ENCODE measurements at regions of chr17 and their contacts with region 1.

Region 1: GRCh38 chr17:50094753-50095619 is at the start of gene PDK2:
- DNase-seq: peak; percentile 97
- ATAC-seq: peak; percentile 93
- H3K4me3 Mint-ChIP-seq: peak within 1 kb of the TSS; percentile 84
- H3K27ac Mint-ChIP-seq: peak within 1 kb of the TSS; percentile 91
- H3K4me1 Mint-ChIP-seq: peaks cover 19% of the 10 kb centered on the region
- H3K27me3 Mint-ChIP-seq: no peaks in the 10 kb centered on the region
- total RNA-seq, gene PDK2: 9.8 to 16.2 TPM

Region 2: GRCh38 chr17:49595980-49596379 is 499.0 kb before region 1 on chr17:
- CTCF ChIA-PET with region 1: no interaction called
- POLR2A ChIA-PET with region 1: no interaction called
- intact Hi-C with region 1: no loop called
- DNase-seq: no peak
- ATAC-seq: no peak
- H3K4me3 Mint-ChIP-seq: no peak overlapping the region
- H3K27ac Mint-ChIP-seq: no peak overlapping the region
- H3K4me1 Mint-ChIP-seq: no peaks in the 10 kb centered on the region
- H3K27me3 Mint-ChIP-seq: no peaks in the 10 kb centered on the region

Region 3: DNA sequence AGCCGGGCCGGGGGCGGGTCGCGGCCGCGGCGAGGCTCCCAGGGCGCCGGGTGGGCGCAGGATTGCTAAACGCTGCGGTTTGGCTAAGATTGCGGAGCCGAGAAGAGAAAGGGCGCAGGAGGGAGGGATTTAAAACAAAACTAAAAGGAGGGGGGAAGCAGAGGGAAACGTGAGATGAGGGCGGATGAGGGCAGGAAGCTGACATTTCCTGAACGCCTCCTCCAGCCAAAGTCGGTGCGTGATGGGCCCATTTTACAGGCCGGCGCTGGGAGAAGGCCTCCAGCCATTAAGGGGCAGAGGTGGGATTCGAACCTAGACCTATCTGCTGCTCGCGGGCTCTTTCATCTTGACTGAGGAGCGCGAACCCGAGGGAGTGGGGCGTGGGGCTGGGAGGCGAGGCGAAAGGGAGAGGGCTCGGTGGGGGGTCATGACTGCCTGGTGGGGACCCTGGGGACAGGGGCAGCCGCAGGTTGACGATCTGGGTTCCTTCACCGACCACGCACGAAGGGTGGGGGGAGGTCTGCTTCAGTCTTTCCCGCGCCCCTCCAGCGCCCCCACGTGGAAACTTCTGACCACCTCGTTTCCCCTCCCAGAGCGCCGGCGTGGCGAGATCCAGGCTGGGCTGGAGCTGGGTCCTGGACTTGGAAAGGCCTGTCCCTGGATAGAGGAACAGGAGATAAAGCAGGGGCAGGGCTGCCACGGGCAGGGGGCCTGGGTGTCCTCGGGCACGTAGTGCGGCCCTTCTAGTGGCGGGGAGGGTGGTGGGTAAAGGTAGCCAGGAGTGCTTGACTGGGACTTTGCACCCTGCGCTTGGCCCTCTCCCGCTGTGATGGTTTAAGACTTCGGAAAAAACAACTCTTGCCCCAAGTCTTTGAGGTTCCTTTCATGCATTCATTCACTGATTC is 243.3 kb before region 1 on chr17:
- CTCF ChIA-PET with region 1: no interaction called
- POLR2A ChIA-PET with region 1: no interaction called
- intact Hi-C with region 1: loop called in 1 of 2 experiments (anchors 1 kb)
- DNase-seq: peak; percentile 83
- ATAC-seq: peak; percentile 74
- H3K4me3 Mint-ChIP-seq: peak overlapping the region; percentile 76
- H3K27ac Mint-ChIP-seq: peak overlapping the region; percentile 84
- H3K4me1 Mint-ChIP-seq: peaks cover 13% of the 10 kb centered on the region
- H3K27me3 Mint-ChIP-seq: peaks cover 1% of the 10 kb centered on the region

Region 4: DNA sequence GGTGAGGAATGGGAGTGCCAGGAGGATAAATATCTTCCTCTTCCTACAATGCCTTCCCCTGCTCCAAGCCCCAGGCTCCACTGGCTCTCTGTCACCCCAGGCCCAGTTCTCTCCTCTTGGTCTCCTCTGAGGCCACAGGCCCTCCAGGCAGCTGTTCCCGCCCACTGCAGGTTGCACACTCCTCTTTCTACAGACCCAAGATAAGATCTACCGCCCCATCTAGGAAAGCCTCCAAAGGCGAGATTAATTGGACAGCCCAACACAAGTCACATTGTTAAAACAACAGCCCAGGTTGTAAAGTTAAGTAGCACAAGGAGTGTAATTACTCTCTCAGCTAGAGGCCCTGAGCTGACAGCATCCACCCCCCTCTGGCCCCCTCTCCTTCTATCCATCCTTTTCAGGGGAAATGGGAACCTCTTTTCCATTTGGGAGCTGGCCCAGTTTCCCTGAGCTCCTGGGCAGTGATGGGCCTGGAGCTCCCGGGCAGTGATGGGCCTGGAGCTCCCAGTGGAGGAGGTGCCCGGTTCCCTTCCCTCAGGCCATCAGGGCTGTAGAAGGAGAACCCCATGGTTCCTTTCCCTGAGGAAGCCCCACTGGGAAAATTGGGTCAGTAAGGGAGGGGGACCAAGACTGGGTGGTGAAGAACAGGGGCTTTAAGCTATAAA is 118.7 kb before region 1 on chr17:
- CTCF ChIA-PET with region 1: no interaction called
- POLR2A ChIA-PET with region 1: no interaction called
- intact Hi-C with region 1: no loop called
- DNase-seq: no peak
- ATAC-seq: no peak
- H3K4me3 Mint-ChIP-seq: no peak overlapping the region
- H3K27ac Mint-ChIP-seq: no peak overlapping the region
- H3K4me1 Mint-ChIP-seq: peaks cover 8% of the 10 kb centered on the region
- H3K27me3 Mint-ChIP-seq: peaks cover 30% of the 10 kb centered on the region

Region 5: DNA sequence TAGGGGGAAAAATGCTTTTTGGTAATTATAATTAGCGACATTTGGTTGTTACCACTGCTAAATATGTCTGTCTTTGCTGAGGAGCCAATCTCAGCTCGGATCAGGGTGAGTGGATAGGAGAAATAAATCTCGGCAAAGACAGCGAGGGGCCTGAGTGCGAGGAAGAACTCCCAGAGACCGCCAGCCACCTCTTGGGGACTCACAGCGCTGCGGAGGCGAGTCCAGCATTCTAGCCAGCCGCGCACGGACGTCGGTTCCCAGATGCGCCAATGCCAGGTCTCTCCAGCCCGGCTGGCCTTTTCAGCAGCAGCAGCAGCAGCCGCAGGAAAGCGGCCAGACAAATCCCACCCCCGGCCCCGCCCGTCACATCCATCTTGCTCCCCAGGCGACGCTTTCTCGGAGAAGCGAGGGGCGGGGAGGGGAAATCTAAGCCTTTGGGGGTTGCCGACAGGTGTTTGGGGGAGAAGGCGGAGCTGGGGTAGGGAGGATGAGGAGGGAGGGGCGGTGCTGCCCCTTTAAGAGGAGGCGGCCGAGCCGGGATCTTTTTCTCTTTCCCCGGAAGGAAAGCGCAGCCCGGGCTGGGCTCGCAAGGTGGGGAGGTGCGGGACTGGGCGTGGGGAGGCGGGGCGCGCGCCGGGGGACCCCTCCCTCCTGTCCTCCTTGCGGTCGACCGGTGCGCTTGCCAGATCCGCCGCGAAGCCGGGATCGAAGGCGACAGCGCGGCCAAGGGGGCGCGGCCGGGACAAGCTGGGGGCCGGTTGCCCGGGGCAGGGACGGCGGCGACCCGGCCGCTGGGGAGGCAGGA is 39.4 kb before region 1 on chr17 and contains the start of gene ITGA3:
- CTCF ChIA-PET with region 1: interaction called, 22 read pairs
- POLR2A ChIA-PET with region 1: interaction called, 4 read pairs
- intact Hi-C with region 1: loop called in 1 of 2 experiments (anchors 1 kb)
- DNase-seq: peak; percentile 72
- ATAC-seq: peak; percentile 17
- H3K4me3 Mint-ChIP-seq: peak within 1 kb of the TSS; percentile 82
- H3K27ac Mint-ChIP-seq: peak within 1 kb of the TSS; percentile 25
- H3K4me1 Mint-ChIP-seq: peaks cover 33% of the 10 kb centered on the region
- H3K27me3 Mint-ChIP-seq: peaks cover 4% of the 10 kb centered on the region
- total RNA-seq, gene ITGA3: 6.8 to 7.8 TPM

Region 6: DNA sequence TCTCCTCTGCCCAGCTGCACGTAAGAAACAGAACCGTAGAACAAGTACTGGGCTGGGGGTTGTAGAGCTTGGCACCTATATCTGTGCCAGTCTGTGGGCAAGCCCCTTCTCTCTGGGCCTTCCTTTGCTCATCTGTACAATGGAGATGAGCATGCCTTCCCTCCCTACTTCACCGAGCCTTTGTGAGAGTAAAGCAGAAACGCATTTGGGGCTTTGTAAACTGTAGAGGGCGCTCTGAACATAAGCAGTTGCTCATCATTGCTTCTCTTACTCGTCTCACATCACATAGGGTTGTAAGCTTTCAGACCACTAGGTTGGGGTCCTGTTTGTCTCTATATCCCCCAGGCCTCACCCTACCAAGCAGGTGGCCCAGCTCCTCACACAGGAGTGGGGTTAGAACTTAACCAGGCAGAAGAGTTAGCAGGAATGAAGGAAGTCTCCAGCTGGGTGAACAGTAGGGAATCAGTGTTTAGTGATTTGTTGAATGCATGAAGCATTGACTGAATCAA is 19.9 kb after region 1 on chr17:
- CTCF ChIA-PET with region 1: interaction called, 42 read pairs
- POLR2A ChIA-PET with region 1: interaction called, 4 read pairs
- intact Hi-C with region 1: no loop called
- DNase-seq: peak; percentile 65
- ATAC-seq: peak; percentile 76
- H3K4me3 Mint-ChIP-seq: no peak overlapping the region
- H3K27ac Mint-ChIP-seq: no peak overlapping the region
- H3K4me1 Mint-ChIP-seq: peaks cover 7% of the 10 kb centered on the region
- H3K27me3 Mint-ChIP-seq: peaks cover 31% of the 10 kb centered on the region

Region 7: DNA sequence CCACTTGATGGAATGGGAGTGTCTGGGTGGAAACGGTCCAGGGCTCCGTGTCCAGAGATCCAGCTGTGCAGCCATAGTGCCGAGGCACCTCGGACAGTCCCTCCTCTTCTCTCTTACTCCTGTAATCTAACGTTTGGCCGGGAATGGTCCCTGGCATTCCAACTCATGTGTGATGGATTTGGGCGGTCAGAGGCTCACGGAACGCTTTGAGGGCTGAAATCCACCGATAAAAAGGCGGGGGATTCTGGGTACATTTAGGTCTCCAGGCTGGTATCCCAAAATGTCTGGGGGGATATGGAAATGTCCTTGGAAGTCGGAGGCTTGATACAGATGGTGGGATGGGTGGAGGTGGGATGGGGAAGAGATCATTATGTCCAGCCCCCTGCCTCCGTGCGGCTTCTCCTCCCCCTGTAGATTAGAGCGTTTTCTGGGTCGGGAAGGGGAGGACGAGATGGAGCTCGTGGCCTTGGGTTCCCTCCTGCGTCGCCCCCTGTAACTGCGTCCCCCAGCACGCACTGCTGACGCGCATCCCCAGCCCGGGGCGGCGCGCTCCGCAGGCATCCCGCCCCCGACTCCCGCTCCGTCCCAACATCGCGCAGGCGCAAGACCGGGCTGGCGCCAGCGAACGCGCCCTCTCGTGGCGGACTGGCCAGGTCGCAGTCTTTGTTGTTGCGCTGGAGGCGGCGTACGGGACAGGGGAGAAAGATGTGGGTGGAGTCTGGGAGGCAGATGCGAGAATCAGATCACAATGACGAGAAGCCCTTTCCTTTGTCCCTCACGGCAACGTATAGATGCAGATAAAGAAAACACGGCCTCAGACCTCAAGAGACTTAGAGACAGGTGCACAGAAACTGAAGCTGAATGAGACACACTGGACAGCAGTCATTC is 66.3 kb after region 1 on chr17:
- CTCF ChIA-PET with region 1: interaction called, 20 read pairs
- POLR2A ChIA-PET with region 1: no interaction called
- intact Hi-C with region 1: loop called in 1 of 2 experiments (anchors 1 kb)
- DNase-seq: peak; percentile 98
- ATAC-seq: peak; percentile 96
- H3K4me3 Mint-ChIP-seq: peak overlapping the region; percentile 78
- H3K27ac Mint-ChIP-seq: peak overlapping the region; percentile 99
- H3K4me1 Mint-ChIP-seq: peaks cover 42% of the 10 kb centered on the region
- H3K27me3 Mint-ChIP-seq: no peaks in the 10 kb centered on the region

Region 8: DNA sequence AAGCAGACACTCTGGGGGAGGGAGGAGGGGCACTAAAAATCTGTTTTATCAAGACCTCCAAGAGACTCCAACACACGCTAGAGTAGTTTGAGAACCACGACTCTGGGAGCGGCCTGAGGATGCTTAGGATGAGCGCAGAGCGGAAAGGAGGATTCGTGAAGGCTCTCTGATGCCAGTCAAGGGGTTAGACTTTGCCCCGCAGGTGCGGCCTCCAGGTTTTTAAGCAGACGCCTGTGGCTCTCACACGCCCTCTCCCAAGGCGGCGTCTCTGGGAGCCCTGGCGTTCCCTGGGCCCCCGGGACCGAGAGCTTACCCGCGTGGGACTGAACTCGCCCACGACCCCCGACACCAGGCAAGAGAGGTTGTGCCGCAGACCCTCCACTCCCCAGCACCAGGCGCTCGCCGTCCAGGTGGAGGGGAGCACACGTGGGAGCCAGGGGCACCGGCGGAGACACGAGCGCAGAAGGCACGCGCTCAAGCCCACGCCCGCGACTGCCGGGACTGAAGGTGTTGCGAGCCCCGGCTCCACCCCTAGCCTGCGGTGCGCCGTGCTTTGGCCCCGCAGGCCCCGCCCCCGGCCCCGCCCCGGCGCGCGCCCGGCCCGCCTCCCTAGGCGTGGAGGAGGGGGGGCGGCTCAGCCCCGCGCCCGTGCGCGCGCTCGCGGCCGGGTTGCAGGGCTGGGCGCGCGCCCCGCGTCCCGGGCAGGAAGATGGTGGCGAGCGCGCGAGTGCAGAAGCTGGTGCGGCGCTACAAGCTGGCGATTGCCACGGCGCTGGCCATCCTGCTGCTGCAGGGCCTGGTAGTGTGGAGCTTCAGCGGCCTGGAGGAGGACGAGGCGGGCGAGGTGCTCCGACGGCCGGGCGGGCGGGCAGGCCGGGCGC is 250.7 kb after region 1 on chr17 and contains the start of gene XYLT2:
- CTCF ChIA-PET with region 1: no interaction called
- POLR2A ChIA-PET with region 1: no interaction called
- intact Hi-C with region 1: loop called in 1 of 2 experiments (anchors 1 kb)
- DNase-seq: peak; percentile 95
- ATAC-seq: peak; percentile 91
- H3K4me3 Mint-ChIP-seq: peak within 1 kb of the TSS; percentile 90
- H3K27ac Mint-ChIP-seq: peak within 1 kb of the TSS; percentile 94
- H3K4me1 Mint-ChIP-seq: peaks cover 32% of the 10 kb centered on the region
- H3K27me3 Mint-ChIP-seq: no peaks in the 10 kb centered on the region
- total RNA-seq, gene XYLT2: 29.8 to 30.4 TPM